ENCODE measurements at regions of chr12 and their contacts with region 1.

Region 1: GRCh38 chr12:52956987-52957386 is 8.1 kb downstream of the KRT18 start:
- DNase-seq: no peak
- ATAC-seq: no peak
- H3K4me3 ChIP-seq: no peak overlapping the region
- H3K27ac ChIP-seq: no peak overlapping the region
- H3K4me1 ChIP-seq: no peaks in the 10 kb centered on the region
- H3K27me3 ChIP-seq: no peaks in the 10 kb centered on the region
- CTCF ChIP-seq: no peak

Region 2: DNA sequence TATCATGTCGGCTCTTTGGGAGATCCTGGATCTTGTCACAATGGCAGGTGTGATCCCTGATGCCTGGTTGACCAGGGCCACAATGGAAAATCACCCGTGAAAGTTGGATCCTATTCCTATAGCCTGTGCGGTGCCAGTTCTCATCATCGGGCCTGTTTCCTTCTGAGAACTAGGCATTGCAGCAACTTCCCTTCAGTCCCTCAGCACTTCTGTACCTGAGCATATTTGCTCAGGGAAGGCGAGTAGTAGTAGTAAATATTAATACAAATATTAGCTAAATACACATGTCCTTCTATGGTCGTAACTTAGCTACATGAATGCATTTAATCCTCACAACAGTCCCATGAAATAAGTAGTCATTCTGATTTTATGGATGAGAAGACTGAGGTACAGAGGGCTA is 972.3 kb before region 1 on chr12:
- CTCF ChIA-PET with region 1: no interaction called
- POLR2A ChIA-PET with region 1: no interaction called
- intact Hi-C with region 1: no loop called
- DNase-seq: no peak
- ATAC-seq: peak; percentile 59
- H3K4me3 ChIP-seq: no peak overlapping the region
- H3K27ac ChIP-seq: no peak overlapping the region
- H3K4me1 ChIP-seq: no peaks in the 10 kb centered on the region
- H3K27me3 ChIP-seq: no peaks in the 10 kb centered on the region
- CTCF ChIP-seq: no peak

Region 3: GRCh38 chr12:52579468-52580465 is 377.2 kb before region 1 on chr12:
- CTCF ChIA-PET with region 1: no interaction called
- POLR2A ChIA-PET with region 1: no interaction called
- intact Hi-C with region 1: no loop called
- DNase-seq: no peak
- ATAC-seq: no peak
- H3K4me3 ChIP-seq: no peak overlapping the region
- H3K27ac ChIP-seq: no peak overlapping the region
- H3K4me1 ChIP-seq: peaks cover 8% of the 10 kb centered on the region; the same call in 1 of the 2 replicates
- H3K27me3 ChIP-seq: no peaks in the 10 kb centered on the region
- CTCF ChIP-seq: no peak

Region 4: DNA sequence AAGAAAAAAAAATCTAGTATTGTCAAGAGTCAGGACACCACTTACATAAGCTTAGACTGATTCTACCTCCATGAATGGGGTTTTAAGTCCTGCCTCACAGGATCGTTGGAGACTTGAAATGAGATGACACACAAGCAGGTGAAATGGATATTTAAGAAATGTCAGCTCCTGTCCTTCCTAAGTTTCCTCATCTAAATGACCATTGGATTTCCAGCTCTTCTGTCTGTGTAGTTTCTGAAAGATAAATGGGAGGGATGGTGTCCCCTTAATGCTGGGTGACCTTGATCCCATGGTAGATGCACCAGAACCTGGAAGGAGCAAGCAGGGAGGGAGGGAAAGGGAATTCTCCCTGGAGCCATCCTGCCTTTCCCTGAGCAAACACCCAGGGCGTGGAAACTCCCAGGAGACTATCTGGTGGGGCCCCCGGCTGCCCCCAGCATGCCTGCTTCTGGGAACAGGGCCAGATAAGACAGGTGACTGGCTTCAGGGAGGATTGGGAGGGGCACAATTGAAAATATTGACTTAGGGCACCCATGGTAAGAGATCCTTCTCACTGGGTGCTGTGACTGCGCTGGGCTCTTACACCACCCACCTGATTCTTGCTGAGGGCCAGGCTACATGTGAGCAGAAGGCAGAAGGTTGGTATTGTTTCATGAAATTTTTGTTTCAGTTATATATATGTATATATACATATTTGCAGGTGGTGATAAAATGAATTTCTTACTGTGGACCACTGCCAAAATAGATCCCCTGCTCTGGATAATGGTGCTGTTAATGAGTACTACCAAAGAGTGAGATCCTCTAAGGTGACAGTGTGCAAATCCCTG is 61.7 kb before region 1 on chr12:
- CTCF ChIA-PET with region 1: no interaction called
- POLR2A ChIA-PET with region 1: interaction called, 12 read pairs
- intact Hi-C with region 1: no loop called
- DNase-seq: peak; percentile 91
- ATAC-seq: peak; percentile 81
- H3K4me3 ChIP-seq: no peak overlapping the region
- H3K27ac ChIP-seq: peak overlapping the region; percentile 54
- H3K4me1 ChIP-seq: peaks cover 29% of the 10 kb centered on the region
- H3K27me3 ChIP-seq: no peaks in the 10 kb centered on the region
- CTCF ChIP-seq: no peak